PC-3 (cell line): ENCODE measurements at regions of chr17 and their contacts with region 1.

Region 1: GRCh38 chr17:44186307-44187130 is at the start of gene TMUB2:
- DNase-seq: peak; percentile 100
- ATAC-seq: peak; percentile 88
- H3K4me3 ChIP-seq: peak within 1 kb of the TSS; percentile 94
- H3K27ac ChIP-seq: peak within 1 kb of the TSS; percentile 83
- H3K4me1 ChIP-seq: peaks cover 18% of the 10 kb centered on the region
- H3K27me3 ChIP-seq: no peaks in the 10 kb centered on the region
- CTCF ChIP-seq: no peak
- total RNA-seq, gene TMUB2: 38.3 and 43.4 TPM in 2 replicates

Region 2: GRCh38 chr17:43940630-43941029 is 245.9 kb before region 1 on chr17:
- CTCF ChIA-PET with region 1: interaction called, 10 read pairs
- POLR2A ChIA-PET with region 1: no interaction called
- intact Hi-C with region 1: no loop called
- DNase-seq: peak; percentile 60
- ATAC-seq: peak; percentile 31; the same call in 1 of the 2 replicates
- H3K4me3 ChIP-seq: no peak overlapping the region
- H3K27ac ChIP-seq: no peak overlapping the region
- H3K4me1 ChIP-seq: peaks cover 3% of the 10 kb centered on the region; the same call in 1 of the 2 replicates
- H3K27me3 ChIP-seq: no peaks in the 10 kb centered on the region
- CTCF ChIP-seq: peak; percentile 70

Region 3: GRCh38 chr17:44070455-44071197 is 115.9 kb before region 1 on chr17 and contains the start of gene G6PC3:
- CTCF ChIA-PET with region 1: no interaction called
- POLR2A ChIA-PET with region 1: no interaction called
- intact Hi-C with region 1: loop called (anchors 10 kb)
- DNase-seq: peak; percentile 99
- ATAC-seq: peak; percentile 79
- H3K4me3 ChIP-seq: peak within 1 kb of the TSS; percentile 70
- H3K27ac ChIP-seq: peak within 1 kb of the TSS; percentile 85
- H3K4me1 ChIP-seq: peaks cover 26% of the 10 kb centered on the region
- H3K27me3 ChIP-seq: no peaks in the 10 kb centered on the region
- CTCF ChIP-seq: no peak
- total RNA-seq, gene G6PC3: 60.1 and 69.5 TPM in 2 replicates

Region 4: DNA sequence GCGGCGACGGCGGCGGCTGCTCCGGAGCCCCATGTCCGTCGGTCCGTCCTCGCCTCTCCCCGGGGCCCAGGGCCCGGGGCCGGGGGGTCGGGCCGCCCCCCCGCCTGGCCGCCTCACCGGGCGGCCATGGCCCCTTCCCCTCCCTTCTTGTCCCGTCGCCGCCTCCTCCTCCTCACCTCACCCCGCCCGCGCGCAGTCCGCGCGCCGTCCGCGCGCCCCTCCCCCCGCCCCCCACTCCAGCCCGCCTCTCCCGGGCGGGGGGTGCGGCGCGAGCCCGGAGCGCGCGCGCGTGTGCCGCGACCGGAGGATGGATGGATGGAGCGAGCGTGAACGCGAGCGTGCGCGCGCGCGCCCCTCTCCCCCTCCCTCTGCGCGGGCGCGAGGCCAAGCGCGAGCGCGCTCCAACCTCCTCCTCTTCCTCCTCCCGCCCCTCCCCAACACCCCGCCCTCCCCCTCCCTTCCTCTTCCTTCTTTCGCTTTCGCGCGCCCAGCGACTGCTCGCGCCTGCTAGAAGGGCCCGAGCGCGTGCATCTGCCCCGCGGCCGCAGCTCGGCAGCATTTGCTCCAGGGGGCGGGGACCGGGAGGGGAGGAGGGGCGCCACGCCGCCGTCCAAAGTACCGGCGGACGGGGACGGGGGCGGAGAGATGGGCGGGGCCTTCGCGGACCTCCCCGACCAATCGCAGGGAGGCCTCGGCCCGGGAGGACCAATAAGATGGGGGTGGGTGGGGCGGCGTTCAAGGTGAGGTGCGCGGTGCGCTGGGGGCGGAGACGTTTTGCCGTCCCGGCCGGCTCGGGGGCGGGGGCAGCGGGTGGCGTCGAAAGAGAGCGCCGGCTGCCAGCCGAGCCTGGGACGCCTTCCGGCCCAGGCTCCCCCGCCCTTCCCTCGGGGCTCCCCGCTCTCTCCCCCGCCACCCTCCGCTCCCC is 13.3 kb after region 1 on chr17 and contains the start of gene ATXN7L3:
- CTCF ChIA-PET with region 1: no interaction called
- POLR2A ChIA-PET with region 1: no interaction called
- intact Hi-C with region 1: loop called (anchors 1 kb)
- DNase-seq: peak; percentile 99
- ATAC-seq: peak; percentile 77
- H3K4me3 ChIP-seq: peak within 1 kb of the TSS; percentile 89
- H3K27ac ChIP-seq: peak within 1 kb of the TSS; percentile 79
- H3K4me1 ChIP-seq: peaks cover 36% of the 10 kb centered on the region
- H3K27me3 ChIP-seq: no peaks in the 10 kb centered on the region
- CTCF ChIP-seq: no peak
- total RNA-seq, gene ATXN7L3: 73.9 and 78.3 TPM in 2 replicates

Region 5: GRCh38 chr17:44210342-44211192 is 24.0 kb after region 1 on chr17:
- CTCF ChIA-PET with region 1: interaction called, 11 read pairs
- POLR2A ChIA-PET with region 1: no interaction called
- intact Hi-C with region 1: no loop called
- DNase-seq: peak; percentile 85
- ATAC-seq: peak; percentile 81
- H3K4me3 ChIP-seq: no peak overlapping the region
- H3K27ac ChIP-seq: peak overlapping the region; percentile 67
- H3K4me1 ChIP-seq: peaks cover 31% of the 10 kb centered on the region
- H3K27me3 ChIP-seq: no peaks in the 10 kb centered on the region
- CTCF ChIP-seq: peak; percentile 98

Region 6: GRCh38 chr17:44218344-44219107 is 32.0 kb after region 1 on chr17:
- CTCF ChIA-PET with region 1: interaction called, 8 read pairs
- POLR2A ChIA-PET with region 1: interaction called, 15 read pairs
- intact Hi-C with region 1: no loop called
- DNase-seq: peak; percentile 97
- ATAC-seq: peak; percentile 10
- H3K4me3 ChIP-seq: peak overlapping the region; percentile 73
- H3K27ac ChIP-seq: peak overlapping the region; percentile 71
- H3K4me1 ChIP-seq: peaks cover 32% of the 10 kb centered on the region
- H3K27me3 ChIP-seq: no peaks in the 10 kb centered on the region
- CTCF ChIP-seq: peak; percentile 76

Region 7: GRCh38 chr17:44230140-44230539 is 43.6 kb after region 1 on chr17:
- CTCF ChIA-PET with region 1: no interaction called
- POLR2A ChIA-PET with region 1: no interaction called
- intact Hi-C with region 1: no loop called
- DNase-seq: no peak
- ATAC-seq: no peak
- H3K4me3 ChIP-seq: no peak overlapping the region
- H3K27ac ChIP-seq: no peak overlapping the region
- H3K4me1 ChIP-seq: peaks cover 17% of the 10 kb centered on the region
- H3K27me3 ChIP-seq: no peaks in the 10 kb centered on the region
- CTCF ChIP-seq: no peak

Region 8: DNA sequence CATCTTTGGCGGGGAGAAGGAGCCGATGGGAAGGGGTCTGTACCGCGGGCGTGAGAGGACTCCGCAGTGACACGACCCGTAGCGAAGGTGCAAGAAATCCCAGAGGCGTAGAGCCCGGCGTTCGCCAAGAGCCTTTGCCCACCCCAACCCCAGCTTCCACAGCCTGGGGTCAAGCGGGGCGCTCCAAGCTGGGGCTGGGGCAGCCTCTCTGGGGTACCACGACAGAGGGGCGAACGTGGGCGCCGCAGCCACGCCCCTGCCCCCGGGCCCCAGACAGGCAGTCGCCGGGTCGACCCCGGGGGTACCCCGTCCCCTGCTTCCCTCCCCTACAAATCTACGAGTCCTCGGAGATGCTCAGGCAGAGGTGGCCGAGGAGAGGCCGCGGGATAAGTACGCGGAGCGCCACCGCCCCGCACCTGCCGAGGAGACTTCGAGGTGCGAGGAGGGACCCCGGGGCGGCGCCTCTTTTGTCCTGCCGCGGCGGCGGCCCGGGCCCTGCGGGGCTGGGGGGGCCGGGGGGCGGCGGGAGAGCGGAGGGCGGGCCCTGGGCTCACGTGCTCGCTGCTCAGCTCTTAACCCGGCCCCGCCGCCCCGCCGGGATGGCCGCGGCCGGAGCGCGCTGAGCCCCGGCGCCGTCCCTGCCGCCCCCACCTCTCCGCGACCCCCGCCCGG is 572.0 kb after region 1 on chr17 and contains the start of gene ADAM11:
- CTCF ChIA-PET with region 1: no interaction called
- POLR2A ChIA-PET with region 1: interaction called, 13 read pairs
- intact Hi-C with region 1: no loop called
- DNase-seq: no peak
- ATAC-seq: peak; percentile 52
- H3K4me3 ChIP-seq: peak within 1 kb of the TSS; percentile 68
- H3K27ac ChIP-seq: no peak within 1 kb of the TSS
- H3K4me1 ChIP-seq: peaks cover 4% of the 10 kb centered on the region; the same call in 1 of the 2 replicates
- H3K27me3 ChIP-seq: 0 out of 2 replicates have a peak, but pooled peaks cover 5% of the 10 kb centered on the region
- CTCF ChIP-seq: no peak
- total RNA-seq, gene ADAM11: 2.7 and 2.9 TPM in 2 replicates